ENCODE measurements at regions of chr17 and their contacts with region 1.

Region 1: DNA sequence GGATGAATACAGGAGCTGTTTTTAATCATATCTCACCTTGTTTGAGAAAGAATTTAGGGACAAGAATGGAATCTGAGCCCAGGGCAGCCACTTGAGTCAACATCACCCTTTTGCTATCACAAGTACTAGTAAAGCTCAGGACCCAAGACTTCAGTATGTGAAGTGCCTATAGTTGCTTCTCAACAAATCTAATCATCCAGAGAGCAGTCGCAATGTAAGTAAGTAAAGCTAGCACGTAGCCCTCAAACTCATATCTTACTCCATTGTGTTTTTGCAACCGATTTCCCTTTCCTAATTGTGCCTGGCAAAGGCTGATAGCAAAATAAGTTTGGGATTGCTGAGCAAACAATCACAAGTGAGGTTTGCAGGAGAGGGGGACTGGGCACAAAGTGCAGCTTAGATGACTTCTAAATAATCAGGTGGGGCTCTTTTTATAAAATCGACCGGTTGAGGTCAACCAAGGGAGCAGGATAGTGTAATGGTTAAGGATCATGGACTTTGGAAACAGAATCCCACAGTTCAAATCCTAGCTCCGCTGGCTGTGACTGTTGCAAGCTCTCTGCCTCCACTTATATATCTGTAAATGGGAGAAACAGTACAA is 13.0 kb downstream of the TOB1 start:
- DNase-seq: no peak
- H3K4me3 ChIP-seq: no peak overlapping the region
- H3K27ac ChIP-seq: peak overlapping the region in 1 of 2 donors; percentile 75
- H3K4me1 ChIP-seq: no peaks in the 10 kb centered on the region
- H3K27me3 ChIP-seq: no peaks in the 10 kb centered on the region
- CTCF ChIP-seq: no peak
- EP300 ChIP-seq: no peak
- POLR2A ChIP-seq: no peak

Region 2: GRCh38 chr17:50630524-50631194 is 222.5 kb before region 1 on chr17:
- intact Hi-C with region 1: no loop called
- DNase-seq: peak in 1 of 5 donors; percentile 44
- H3K4me3 ChIP-seq: no peak overlapping the region
- H3K27ac ChIP-seq: no peak overlapping the region
- H3K4me1 ChIP-seq: peaks cover 7% of the 10 kb centered on the region
- H3K27me3 ChIP-seq: no peaks in the 10 kb centered on the region
- CTCF ChIP-seq: peak in 2 of 3 donors; percentile 51 to 63
- EP300 ChIP-seq: no peak
- POLR2A ChIP-seq: no peak

Region 3: DNA sequence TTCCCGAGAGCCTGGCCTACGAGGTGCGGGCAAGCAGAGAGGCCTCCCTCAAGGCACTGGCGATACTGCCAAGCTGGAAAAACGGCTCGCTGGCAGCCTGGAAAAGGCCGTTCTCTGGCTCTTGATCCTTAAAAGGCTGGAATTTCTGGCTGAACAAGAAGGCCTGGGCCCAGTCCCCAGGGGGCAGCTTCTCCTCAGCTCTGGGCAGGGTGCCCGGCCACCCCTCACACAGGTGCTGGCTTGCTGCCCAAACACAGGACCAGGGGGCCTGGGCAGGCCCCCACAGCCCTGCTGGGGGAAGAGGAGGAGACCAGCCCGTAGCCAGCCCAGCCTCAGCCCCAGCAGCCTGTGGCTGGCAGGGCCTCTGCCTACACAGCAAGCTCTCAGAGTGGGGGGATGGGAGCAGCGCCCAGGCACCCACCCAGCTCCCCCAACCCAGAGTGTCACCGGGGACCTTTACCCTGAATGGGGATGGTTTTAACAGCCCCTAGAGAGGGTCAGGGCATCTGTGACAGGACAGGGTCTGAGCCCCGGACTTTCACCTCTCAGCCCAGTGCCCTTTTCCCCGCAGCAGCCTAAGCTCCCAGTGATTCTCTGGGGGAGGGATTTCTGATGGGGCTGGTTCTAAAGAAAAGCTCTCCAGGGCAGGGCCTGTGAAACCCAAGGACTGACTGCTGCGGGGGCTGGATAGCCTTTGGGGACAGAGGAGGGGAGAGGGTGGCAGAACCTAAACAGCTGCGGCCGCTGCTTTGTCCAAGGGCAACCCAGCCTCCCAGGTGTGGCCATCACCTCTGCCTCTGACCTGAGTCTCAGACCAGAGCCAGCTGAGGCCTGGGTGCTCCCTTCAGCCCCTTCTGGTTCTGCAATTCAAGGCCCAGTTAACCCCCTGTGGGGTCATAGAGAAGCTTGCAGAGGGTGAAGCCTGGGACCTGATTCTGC is 51.7 kb after region 1 on chr17:
- intact Hi-C with region 1: no loop called
- DNase-seq: peak; percentile 50 to 83 (median 70)
- H3K4me3 ChIP-seq: no peak overlapping the region
- H3K27ac ChIP-seq: peak overlapping the region; percentile 64 to 66
- H3K4me1 ChIP-seq: peaks cover 6% of the 10 kb centered on the region
- H3K27me3 ChIP-seq: no peaks in the 10 kb centered on the region
- CTCF ChIP-seq: no peak
- EP300 ChIP-seq: no peak
- POLR2A ChIP-seq: no peak

Region 4: DNA sequence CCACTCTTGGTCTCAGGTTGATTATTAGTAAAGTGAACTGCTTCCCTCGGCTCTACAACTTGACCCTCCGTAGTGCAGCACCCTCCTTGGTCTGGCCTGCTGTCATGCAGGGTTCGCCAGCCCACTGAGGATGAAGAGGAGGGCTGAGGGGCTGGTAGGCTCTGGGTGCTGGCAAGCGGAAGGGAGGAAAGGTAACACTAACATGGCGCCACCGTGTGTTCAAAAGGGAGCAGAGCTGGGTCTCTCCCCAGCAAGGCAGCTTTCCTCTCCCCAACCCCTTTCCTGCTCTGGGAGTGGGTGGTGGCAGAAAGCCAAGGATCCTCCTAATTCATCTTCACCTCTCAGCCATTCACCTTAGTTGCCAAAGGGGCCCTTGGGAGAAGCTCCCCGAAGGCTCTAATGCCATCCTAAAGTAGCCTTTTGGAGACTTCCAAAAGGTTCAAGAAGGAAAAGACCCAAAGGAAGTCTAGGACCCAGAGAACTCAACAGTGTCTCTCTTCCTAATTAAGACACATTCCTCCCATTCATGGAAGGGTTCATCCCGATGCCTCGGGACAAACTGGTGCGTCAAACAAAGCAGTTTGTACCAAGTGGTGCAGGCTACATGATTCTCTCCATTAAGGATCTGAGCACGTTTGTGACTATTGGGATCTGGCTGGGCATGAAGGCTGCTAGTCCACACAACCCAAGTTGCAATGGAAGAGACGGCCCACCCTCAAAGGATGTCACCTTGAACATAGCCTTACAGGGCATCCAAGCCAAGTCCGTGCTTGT is 103.8 kb after region 1 on chr17:
- intact Hi-C with region 1: loop called in 3 of 4 experiments (anchors 2 to 5 kb)
- DNase-seq: peak; percentile 70 to 79 (median 74)
- H3K4me3 ChIP-seq: no peak overlapping the region
- H3K27ac ChIP-seq: peak overlapping the region in 1 of 2 donors; percentile 36
- H3K4me1 ChIP-seq: peaks cover 18% of the 10 kb centered on the region
- H3K27me3 ChIP-seq: no peaks in the 10 kb centered on the region
- CTCF ChIP-seq: peak; percentile 48 to 56 (median 52)
- EP300 ChIP-seq: no peak
- POLR2A ChIP-seq: no peak

Measured in ovary (tissue), 10 donors.